H1 (cell line): ENCODE measurements at regions of chr1 and their contacts with region 1.

Region 1: GRCh38 chr1:209435654-209436566 is 147.6 kb upstream of the CAMK1G start:
- DNase-seq: peak; percentile 75 to 97
- H3K4me3 ChIP-seq: no peak overlapping the region
- H3K27ac ChIP-seq: no peak overlapping the region
- H3K4me1 ChIP-seq: peaks cover 8 to 29% (median 25%) of the 10 kb centered on the region in 4 experiments
- H3K27me3 ChIP-seq: no peaks in the 10 kb centered on the region
- CTCF ChIP-seq: peak; percentile 92 to 93 (median 93)
- EP300 ChIP-seq: 0 out of 3 replicates have a peak, but pooled peaks of 1 of the 2 experiments have one; percentile 14
- POLR2A ChIP-seq: no peak
- RAD21 ChIP-seq: peak; percentile 99

Region 2: GRCh38 chr1:209383907-209384709 is 51.8 kb before region 1 on chr1:
- CTCF ChIA-PET with region 1: interaction called, 19 read pairs
- POLR2A ChIA-PET with region 1: interaction called, 3 read pairs
- DNase-seq: no peak
- H3K4me3 ChIP-seq: no peak overlapping the region
- H3K27ac ChIP-seq: peak overlapping the region; percentile 26
- H3K4me1 ChIP-seq: peaks cover 3 to 18% (median 13%) of the 10 kb centered on the region in 4 experiments; a peak in 4 of 7 replicates
- H3K27me3 ChIP-seq: no peaks in the 10 kb centered on the region
- CTCF ChIP-seq: no peak
- EP300 ChIP-seq: no peak
- POLR2A ChIP-seq: no peak
- RAD21 ChIP-seq: no peak

Region 3: GRCh38 chr1:209421186-209421585 is 14.7 kb before region 1 on chr1:
- CTCF ChIA-PET with region 1: interaction called, 19 read pairs
- POLR2A ChIA-PET with region 1: interaction called, 3 read pairs
- DNase-seq: no peak
- H3K4me3 ChIP-seq: no peak overlapping the region
- H3K27ac ChIP-seq: no peak overlapping the region
- H3K4me1 ChIP-seq: peaks cover 0 to 7% (median 2%) of the 10 kb centered on the region in 4 experiments; a peak in 3 of 7 replicates
- H3K27me3 ChIP-seq: peaks cover 0 to 7% (median 1%) of the 10 kb centered on the region in 4 experiments; a peak in 3 of 7 replicates
- CTCF ChIP-seq: no peak
- EP300 ChIP-seq: no peak
- POLR2A ChIP-seq: no peak
- RAD21 ChIP-seq: no peak

Region 4: DNA sequence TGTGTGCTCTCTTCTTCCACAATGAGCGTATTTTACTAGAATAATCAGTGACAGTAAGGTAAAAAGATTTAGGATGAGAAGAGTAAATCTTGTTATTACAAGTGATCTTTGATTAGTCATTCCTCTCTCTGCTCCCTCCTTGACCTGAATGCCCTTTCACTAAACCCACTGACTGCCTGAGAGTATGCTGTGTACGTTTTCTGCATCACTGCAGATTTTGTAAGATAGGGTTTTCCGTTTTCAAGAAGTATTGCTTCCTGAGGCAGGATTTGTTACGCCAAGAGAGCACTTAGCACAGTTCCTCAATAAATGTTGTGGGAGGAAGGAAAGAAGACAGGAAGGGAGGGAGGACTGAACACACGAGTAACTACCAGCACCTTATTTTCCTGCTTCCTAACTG is 224.0 kb after region 1 on chr1:
- CTCF ChIA-PET with region 1: no interaction called
- POLR2A ChIA-PET with region 1: no interaction called
- DNase-seq: no peak
- H3K4me3 ChIP-seq: no peak overlapping the region
- H3K27ac ChIP-seq: no peak overlapping the region
- H3K4me1 ChIP-seq: peaks cover 0 to 3% (median 0%) of the 10 kb centered on the region in 4 experiments; a peak in 2 of 7 replicates
- H3K27me3 ChIP-seq: 0 out of 7 replicates have a peak, but pooled peaks cover 0 to 2% (median 0%) of the 10 kb centered on the region in 4 experiments
- CTCF ChIP-seq: no peak
- EP300 ChIP-seq: no peak
- POLR2A ChIP-seq: no peak
- RAD21 ChIP-seq: no peak